Left lung (tissue), 14 donors: ENCODE measurements at regions of chr5 and their contacts with region 1.

Region 1: GRCh38 chr5:1174122-1174936 is 27.1 kb upstream of the SLC6A19 start:
- DNase-seq: peak in 3 of 4 donors; percentile 38 to 86 (median 56)
- ATAC-seq: peak; percentile 94
- H3K4me3 ChIP-seq: no peak overlapping the region
- H3K27ac ChIP-seq: no peak overlapping the region
- H3K4me1 ChIP-seq: no peaks in the 10 kb centered on the region
- H3K27me3 ChIP-seq: no peaks in the 10 kb centered on the region
- CTCF ChIP-seq: peak; percentile 57 to 75

Region 2: DNA sequence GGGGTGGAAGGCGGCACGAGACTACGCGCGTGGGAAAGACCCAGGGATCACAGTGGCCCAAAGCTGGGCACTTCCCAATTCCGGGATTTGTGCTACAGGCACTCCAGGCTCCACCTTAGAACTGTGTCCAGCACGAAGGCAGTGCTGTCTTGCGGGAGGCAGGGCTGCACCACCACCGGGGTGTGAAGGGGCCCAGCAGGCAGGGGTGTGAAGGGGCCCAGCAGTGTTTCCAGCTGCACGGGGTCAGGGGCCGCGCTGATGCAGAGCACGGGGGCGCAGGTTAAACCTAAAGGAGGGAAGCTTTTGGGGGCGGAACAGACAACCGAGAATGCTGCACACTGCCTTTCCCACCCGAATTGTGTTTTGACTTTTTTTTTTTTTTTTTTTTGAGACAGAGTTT is 904.0 kb before region 1 on chr5:
- intact Hi-C with region 1: no loop called
- DNase-seq: peak in 1 of 4 donors; percentile 82
- ATAC-seq: no peak
- H3K4me3 ChIP-seq: peak overlapping the region in 1 of 2 donors; percentile 89
- H3K27ac ChIP-seq: peak overlapping the region in 1 of 2 donors; percentile 95
- H3K4me1 ChIP-seq: peaks cover 0 to 18% of the 10 kb centered on the region in 2 donors
- H3K27me3 ChIP-seq: no peaks in the 10 kb centered on the region
- CTCF ChIP-seq: no peak

Region 3: DNA sequence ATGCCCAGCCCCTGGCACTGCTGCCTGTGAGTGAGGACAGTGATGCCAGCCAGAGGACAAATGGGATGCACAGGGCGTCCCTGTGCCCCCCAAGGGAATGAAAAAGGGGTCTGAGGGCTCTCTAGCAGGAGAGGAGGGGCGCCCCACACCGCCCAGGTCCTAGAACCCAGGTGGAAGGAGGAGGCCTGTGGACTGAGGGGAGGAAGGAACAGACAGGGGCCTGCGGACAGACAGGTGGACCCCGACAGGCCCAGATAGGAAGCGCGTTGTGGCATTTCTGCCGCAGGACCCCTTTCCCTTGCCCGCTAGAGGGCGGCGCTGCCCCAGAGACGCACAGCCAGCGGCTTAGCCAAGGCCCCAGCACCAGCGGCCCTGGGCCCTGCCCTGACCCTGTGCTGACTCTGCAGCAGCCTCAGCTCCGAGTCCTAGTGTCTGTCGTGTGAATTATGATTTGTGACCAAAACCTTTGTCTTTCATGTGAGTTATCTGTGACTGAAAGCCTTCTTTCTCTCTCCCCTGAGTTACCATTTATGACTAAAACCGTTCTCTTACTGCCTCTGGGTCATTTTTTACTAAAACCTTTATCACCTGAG is 251.0 kb before region 1 on chr5:
- intact Hi-C with region 1: loop called in 1 of 2 experiments (anchors 10 kb)
- DNase-seq: peak; percentile 70 to 91 (median 80)
- ATAC-seq: peak; percentile 94
- H3K4me3 ChIP-seq: no peak overlapping the region
- H3K27ac ChIP-seq: no peak overlapping the region
- H3K4me1 ChIP-seq: peaks cover 6 to 13% of the 10 kb centered on the region in 2 donors
- H3K27me3 ChIP-seq: peaks cover 8 to 40% of the 10 kb centered on the region in 2 donors
- CTCF ChIP-seq: peak; percentile 84 to 93

Region 4: GRCh38 chr5:1125030-1125357 is 49.3 kb before region 1 on chr5:
- intact Hi-C with region 1: no loop called
- DNase-seq: peak in 2 of 4 donors; percentile 80 to 87
- ATAC-seq: peak; percentile 25
- H3K4me3 ChIP-seq: no peak overlapping the region
- H3K27ac ChIP-seq: peak overlapping the region in 1 of 2 donors; percentile 48
- H3K4me1 ChIP-seq: peaks cover 0 to 9% of the 10 kb centered on the region in 2 donors
- H3K27me3 ChIP-seq: no peaks in the 10 kb centered on the region
- CTCF ChIP-seq: no peak

Region 5: DNA sequence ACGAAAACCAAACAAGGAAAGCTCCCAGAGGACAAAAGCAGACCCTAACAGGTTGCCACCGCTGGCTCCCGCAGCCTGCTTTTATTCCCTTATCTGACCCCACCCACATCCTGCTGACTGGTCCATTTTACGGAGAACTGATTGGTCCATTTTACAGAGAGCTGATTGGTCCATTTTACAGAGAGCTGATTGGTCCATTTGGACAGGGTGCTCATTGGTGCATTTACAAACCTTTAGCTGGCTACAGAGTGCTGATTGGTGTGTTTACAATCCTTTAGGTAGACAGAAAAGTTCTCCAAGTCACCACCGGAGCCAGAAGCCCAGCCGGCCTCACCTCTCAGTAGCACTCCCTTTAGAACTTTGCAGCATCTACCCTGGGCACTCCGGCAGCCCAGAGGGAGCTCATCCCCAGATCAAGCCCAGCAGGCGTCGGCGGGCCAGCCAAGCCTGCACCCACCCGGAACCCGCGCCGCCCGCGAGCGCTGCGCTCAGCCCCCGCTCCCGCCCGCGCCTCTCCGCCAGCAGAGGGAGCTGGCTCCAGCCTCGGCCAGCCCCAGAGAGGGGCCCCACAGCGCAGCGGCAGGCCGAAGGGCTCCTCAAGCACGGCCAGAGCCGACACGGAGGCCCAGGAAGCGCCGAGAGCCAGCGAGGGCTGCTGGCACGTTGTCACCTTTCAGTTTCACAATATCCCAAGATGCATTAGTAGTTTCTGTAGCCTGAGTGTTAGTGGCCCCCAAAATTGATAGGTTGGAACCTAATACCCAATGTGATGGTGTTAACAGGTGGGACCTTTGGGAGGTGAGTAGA is 205.9 kb after region 1 on chr5:
- intact Hi-C with region 1: no loop called
- DNase-seq: peak; percentile 50 to 90 (median 67)
- ATAC-seq: peak; percentile 93
- H3K4me3 ChIP-seq: no peak overlapping the region
- H3K27ac ChIP-seq: no peak overlapping the region
- H3K4me1 ChIP-seq: peaks cover 2 to 12% of the 10 kb centered on the region in 2 donors
- H3K27me3 ChIP-seq: peaks cover 0 to 35% of the 10 kb centered on the region in 2 donors
- CTCF ChIP-seq: peak; percentile 62 to 74